Left colon (tissue), 2 donors: ENCODE measurements at regions of chr17 and their contacts with region 1.

Region 1: GRCh38 chr17:47789611-47790561 is 31.7 kb downstream of the OSBPL7 start:
- DNase-seq: peak in 1 of 2 donors; percentile 50
- ATAC-seq: peak; percentile 90

Region 2: GRCh38 chr17:47404006-47404405 is 385.9 kb before region 1 on chr17:
- intact Hi-C with region 1: no loop called
- DNase-seq: no peak
- ATAC-seq: no peak

Region 3: DNA sequence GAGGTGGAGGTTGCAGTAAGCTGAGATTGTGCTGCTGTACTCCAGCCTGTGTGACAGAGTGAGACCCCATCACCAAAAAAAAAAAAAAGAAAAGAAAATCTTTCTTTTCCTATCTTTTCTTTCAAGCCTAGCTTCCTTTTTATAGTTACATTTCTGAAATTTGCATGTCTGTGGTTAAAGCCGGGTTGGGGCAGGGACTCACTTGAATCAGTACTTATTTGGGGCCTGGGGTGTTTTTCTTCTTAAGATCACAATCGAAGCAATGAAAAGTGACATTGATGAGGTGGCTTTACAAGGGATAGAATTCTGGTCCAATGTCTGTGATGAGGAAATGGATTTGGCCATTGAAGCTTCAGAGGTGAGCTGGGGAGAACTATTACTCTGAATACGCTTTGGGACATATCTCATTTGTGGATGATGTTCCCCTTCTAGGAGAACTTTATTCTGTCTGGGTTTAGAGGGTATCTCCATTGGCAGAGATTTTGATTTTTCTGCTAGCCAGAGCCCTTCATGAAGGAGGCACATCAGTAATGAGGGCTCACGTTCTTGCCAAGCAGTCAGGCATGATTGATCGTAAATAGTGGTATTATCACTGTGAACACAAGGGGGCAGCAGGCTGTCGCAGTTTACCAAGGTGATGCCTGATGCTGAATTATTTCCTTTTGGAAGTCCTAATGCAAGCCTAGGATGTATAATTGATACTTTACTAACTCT is 125.8 kb before region 1 on chr17:
- intact Hi-C with region 1: loop called in 1 of 2 experiments (anchors 10 kb)
- DNase-seq: peak in 1 of 2 donors; percentile 54
- ATAC-seq: peak; percentile 76

Region 4: GRCh38 chr17:47850692-47851573 is 61.0 kb after region 1 on chr17 and contains the start of gene SP6:
- intact Hi-C with region 1: no loop called
- DNase-seq: peak; percentile 86 to 91
- ATAC-seq: peak; percentile 96
- total RNA-seq, gene SP6: 4.4 to 20.5 TPM